Activated CD8-positive, alpha-beta T cell treated with anti-CD3 and anti-CD28 coated beads for 36 hours (primary cell): ENCODE measurements at regions of chr9 and their contacts with region 1.

Region 1: DNA sequence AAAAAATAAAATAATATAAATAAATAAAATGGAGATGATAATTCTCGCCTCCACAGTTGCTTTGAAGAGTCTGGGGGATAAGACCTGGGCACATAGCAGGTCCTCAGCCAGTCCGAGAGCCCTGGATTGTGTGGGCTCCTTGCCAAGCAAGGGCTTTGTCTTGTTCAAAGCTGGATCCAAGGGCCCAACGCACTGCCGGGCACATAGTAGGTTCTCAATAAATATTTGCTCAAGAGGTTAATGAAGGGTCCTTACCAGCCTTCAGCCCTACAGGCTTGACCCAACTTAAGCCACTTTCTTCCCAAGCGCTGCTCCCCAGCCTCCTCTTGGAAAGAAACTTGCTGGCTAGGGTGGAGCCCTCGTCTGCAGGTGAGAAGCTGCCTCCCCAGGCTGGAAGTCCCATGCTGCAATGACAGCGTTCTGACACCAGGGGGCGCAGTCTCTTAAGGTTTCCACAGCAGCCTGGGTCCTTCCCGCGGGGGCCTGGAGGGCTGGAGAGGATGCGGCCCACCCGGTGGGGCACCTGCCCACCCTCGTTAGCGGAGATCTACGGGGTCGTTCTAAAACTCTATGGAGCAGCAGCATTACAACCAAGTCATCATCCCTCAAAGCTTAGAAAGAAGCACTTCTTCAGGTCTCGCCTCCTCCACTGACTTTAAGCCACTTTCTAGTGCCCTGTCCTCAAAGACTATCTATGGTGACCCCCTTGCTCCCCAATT is 115.2 kb downstream of the LHX2 start:
- DNase-seq: peak; percentile 87
- ATAC-seq: peak; percentile 73
- H3K4me3 Mint-ChIP-seq: no peak overlapping the region
- H3K27ac Mint-ChIP-seq: no peak overlapping the region
- H3K4me1 Mint-ChIP-seq: peaks cover 4% of the 10 kb centered on the region
- H3K27me3 Mint-ChIP-seq: peaks cover 10% of the 10 kb centered on the region
- CTCF ChIP-seq: peak; percentile 99

Region 2: DNA sequence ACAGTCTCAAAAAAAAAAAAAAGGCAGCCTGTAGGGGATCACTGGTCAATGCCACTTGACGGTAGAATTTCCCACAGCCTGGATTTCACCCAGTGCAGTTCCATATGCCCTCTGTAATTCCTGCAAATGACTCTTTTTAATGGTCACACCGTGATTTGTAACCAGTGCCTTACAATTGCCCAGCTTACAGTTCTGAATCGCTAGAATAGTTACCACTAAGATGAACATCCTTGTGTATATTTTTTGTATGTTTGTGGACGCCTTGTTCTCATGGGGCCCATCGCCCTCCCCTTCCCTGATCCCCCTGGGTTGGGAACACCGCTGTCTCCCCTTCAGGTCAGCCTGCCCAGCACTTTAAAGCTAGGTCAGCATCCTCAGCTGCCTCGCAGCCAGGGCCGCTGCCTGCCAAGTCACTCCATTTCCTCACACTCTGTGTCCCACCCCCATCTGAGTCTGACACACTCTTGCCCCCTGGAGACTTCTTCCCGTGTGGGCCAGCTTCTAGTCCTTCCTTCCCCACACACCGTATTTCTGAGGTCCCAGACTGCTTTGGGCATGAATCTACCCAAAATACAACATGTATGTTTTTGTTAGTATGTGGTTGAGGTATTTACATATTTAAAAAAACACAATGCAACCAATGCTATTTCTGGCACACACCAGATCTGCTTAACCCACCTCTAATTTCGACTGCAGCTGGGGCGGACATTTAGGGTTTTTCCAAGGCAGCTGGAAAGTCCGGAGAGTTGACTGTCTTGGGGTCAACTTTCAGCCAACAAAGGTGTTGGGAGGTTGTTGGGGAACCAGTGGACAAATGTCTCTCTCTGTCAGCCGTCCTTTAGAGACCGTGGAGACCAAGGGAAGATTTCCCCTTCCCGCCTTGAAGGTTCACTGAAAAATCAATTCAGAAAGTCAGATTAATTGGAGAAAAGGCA is 10.5 kb after region 1 on chr9:
- CTCF ChIA-PET with region 1: interaction called, 12 read pairs
- POLR2A ChIA-PET with region 1: interaction called, 4 read pairs
- intact Hi-C with region 1: no loop called
- DNase-seq: no peak
- ATAC-seq: no peak
- H3K4me3 Mint-ChIP-seq: no peak overlapping the region
- H3K27ac Mint-ChIP-seq: no peak overlapping the region
- H3K4me1 Mint-ChIP-seq: no peaks in the 10 kb centered on the region
- H3K27me3 Mint-ChIP-seq: peaks cover 8% of the 10 kb centered on the region
- CTCF ChIP-seq: no peak

Region 3: GRCh38 chr9:124210697-124211096 is 84.0 kb after region 1 on chr9:
- CTCF ChIA-PET with region 1: interaction called, 10 read pairs
- POLR2A ChIA-PET with region 1: no interaction called
- intact Hi-C with region 1: no loop called
- DNase-seq: peak; percentile 80
- ATAC-seq: peak; percentile 94
- H3K4me3 Mint-ChIP-seq: no peak overlapping the region
- H3K27ac Mint-ChIP-seq: peak overlapping the region; percentile 62
- H3K4me1 Mint-ChIP-seq: peaks cover 62% of the 10 kb centered on the region
- H3K27me3 Mint-ChIP-seq: no peaks in the 10 kb centered on the region
- CTCF ChIP-seq: no peak

Region 4: DNA sequence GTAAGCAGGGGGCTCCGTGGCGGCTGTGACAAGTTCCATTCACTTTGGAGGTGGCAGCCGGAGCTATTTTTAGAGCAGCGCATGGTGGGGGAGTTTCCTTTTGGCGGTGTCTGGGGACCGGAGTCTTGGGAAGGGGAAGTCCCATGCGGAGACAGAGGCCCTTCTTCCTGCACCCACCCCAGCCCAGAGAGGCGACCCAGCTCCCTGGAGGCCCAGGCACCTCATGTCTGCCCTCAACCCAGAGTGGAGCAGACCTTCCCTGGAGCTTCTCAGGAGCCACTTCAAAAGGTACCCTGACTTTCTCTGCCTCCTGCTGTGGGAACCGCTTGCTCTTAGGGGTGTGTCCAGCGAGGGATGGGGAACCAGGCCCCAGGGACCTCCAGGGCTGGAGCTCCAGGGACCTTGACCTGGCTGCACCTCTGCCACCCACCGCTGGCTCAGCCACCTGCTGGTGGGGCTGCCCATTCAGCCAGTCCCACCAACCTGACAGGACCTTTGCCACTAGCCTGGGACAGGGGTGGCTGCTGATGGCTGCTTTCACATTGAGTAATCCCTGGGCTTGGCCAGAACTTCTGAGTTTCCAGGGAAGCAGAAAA is 165.2 kb after region 1 on chr9:
- CTCF ChIA-PET with region 1: interaction called, 49 read pairs
- POLR2A ChIA-PET with region 1: no interaction called
- intact Hi-C with region 1: loop called (anchors 5 kb)
- DNase-seq: peak; percentile 86
- ATAC-seq: peak; percentile 87
- H3K4me3 Mint-ChIP-seq: peak overlapping the region; percentile 69
- H3K27ac Mint-ChIP-seq: peak overlapping the region; percentile 76
- H3K4me1 Mint-ChIP-seq: peaks cover 63% of the 10 kb centered on the region
- H3K27me3 Mint-ChIP-seq: peaks cover 5% of the 10 kb centered on the region
- CTCF ChIP-seq: no peak

Region 5: DNA sequence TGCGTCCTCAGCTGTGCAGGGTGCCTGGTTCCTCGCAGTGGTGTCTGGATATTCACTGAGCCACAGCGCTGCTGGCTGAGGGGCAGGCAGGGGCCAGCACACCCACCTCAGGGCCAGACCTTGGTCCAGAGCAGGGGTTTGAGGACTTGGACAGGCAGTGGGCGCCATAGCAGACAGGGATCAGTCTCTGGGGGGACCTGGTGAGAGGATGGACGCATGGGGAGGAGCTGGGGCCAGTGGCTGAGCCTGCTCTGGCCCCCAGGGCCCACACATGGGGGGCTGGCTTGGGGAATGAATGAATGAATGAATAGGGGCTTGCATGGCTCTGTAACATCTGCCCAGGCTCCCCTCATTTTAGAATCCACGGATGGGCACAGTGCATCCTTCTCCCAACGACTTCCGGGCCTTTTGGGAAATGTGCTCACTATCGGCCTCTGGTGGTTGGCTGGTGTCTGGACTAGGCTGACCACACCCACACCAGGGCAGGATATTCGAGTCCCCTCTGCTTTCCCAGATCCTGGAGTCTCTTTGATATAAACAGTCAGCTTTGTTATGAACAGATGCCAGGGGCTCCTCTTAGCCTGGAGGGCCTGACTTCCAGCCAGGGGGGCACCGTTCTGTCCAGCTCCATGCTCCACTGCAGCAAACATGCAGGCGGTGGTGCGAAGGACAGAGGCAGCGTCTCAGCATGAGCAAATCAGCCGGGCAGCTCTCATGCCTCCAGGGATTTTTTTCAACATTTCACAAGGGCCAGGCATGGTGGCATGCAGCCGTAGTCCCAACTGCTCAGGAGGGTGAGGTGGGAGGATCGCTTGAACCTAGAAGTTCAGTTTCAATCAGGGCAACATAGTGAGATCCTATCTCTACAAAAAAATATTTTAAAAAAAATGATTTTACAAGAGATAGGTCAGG is 193.6 kb after region 1 on chr9:
- CTCF ChIA-PET with region 1: interaction called, 13 read pairs
- POLR2A ChIA-PET with region 1: no interaction called
- intact Hi-C with region 1: no loop called
- DNase-seq: peak; percentile 60
- ATAC-seq: peak; percentile 70
- H3K4me3 Mint-ChIP-seq: no peak overlapping the region
- H3K27ac Mint-ChIP-seq: no peak overlapping the region
- H3K4me1 Mint-ChIP-seq: no peaks in the 10 kb centered on the region
- H3K27me3 Mint-ChIP-seq: no peaks in the 10 kb centered on the region
- CTCF ChIP-seq: peak; percentile 79